Sciatic nerve (tissue), 2 donors: ENCODE measurements at regions of chr1 and their contacts with region 1.

Region 1: GRCh38 chr1:70382682-70383081 is 28.2 kb upstream of the ANKRD13C start:
- DNase-seq: no peak
- ATAC-seq: no peak

Region 2: DNA sequence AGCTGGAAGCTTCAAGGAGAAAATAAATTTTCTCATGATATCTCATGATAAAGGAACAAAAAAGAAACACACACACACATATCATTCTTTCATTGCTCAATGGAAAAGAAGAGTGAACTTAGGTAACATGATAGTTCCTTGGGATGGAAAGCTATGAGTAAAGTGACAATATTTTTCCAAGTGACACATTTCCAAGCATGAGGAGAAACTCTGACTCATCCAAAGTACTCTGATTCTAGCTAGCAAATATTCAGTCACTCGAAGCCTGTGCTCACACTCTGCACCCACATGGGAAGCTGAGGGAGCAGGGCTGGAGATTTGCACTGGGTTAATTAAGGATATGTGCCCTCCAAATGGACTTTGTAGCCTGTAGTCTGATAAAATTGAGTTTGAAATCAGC is 399.7 kb before region 1 on chr1:
- intact Hi-C with region 1: no loop called
- DNase-seq: no peak
- ATAC-seq: no peak

Region 3: GRCh38 chr1:70299472-70299871 is 83.2 kb before region 1 on chr1:
- intact Hi-C with region 1: loop called (anchors 2 kb)
- DNase-seq: no peak
- ATAC-seq: no peak

Region 4: DNA sequence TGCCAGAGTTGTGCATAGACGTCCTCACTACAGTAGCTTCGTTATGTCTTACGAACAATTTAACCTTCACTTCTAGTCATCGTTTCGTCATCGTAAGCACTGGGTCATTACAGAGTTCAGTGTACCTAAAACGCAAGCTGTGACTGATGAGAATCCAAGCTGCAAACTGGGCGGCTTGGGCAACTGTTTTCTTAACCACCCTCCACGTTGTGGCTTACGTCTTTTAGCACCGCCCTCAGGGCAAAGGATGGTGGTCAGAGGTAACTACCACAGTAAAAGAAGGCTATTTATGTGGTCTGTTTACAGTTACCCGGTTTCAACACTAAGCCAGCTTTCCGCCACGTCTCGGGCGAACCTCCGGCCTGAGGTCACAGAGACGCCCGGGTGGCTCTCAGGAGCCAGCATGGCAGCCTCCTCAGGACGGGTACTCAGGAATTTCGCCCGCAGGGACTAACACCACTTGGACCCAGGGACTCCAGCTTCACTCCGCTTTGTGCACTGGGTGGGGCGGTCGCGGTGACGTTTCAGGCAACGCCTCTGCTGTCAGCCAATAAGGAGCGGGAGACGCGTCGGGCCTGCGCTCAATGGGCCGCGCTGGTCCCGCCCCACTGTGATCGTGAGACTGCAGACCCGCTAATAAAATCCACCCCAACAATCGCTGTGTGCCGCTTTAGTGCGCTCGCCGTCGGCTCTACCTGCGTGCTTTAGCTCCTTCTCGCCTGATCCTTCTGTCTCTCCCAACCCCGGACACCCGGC is 28.1 kb after region 1 on chr1 and contains the start of gene CTH:
- intact Hi-C with region 1: no loop called
- DNase-seq: peak; percentile 97
- ATAC-seq: peak; percentile 100
- total RNA-seq, gene CTH: 5.3 TPM

Region 5: DNA sequence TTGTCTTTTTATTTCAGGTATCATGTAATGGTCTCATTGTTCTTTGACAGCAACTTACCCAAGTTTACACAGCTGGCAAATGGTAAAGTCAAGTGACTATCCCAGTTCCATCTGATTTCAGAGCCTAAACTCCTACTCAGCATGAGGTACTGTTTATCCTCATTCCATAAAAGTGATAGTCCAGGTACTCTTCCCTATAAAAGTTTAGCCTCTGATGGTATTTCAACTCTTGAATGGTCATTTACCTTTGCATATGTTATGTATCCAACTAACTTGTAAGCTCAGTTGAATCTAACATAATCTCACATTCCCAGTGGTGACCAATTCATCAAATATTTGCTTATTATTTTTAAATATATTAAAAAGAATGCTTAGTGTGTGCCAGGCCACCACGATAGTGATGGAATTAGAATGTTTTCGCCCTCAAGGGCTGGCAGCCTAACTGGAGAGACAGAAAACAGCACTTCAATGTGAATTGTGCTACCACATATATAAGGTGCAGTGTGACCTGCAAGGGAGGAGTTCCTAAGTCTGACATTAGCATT is 335.5 kb after region 1 on chr1:
- intact Hi-C with region 1: no loop called
- DNase-seq: no peak
- ATAC-seq: no peak